Heart left ventricle (tissue), 16 donors: ENCODE measurements at regions of chr10 and their contacts with region 1.

Region 1: GRCh38 chr10:78763651-78764311 is 305.0 kb upstream of the ZMIZ1 start:
- DNase-seq: peak; percentile 43 to 66 (median 63)
- ATAC-seq: peak; percentile 66 to 78 (median 70)
- H3K4me3 ChIP-seq: no peak overlapping the region
- H3K27ac ChIP-seq: peak overlapping the region in 8 of 12 donors; percentile 3 to 83 (median 60)
- H3K4me1 ChIP-seq: peaks cover 0 to 21% (median 9%) of the 10 kb centered on the region in 12 donors
- H3K27me3 ChIP-seq: no peaks in the 10 kb centered on the region
- CTCF ChIP-seq: no peak
- POLR2A ChIP-seq: no peak

Region 2: DNA sequence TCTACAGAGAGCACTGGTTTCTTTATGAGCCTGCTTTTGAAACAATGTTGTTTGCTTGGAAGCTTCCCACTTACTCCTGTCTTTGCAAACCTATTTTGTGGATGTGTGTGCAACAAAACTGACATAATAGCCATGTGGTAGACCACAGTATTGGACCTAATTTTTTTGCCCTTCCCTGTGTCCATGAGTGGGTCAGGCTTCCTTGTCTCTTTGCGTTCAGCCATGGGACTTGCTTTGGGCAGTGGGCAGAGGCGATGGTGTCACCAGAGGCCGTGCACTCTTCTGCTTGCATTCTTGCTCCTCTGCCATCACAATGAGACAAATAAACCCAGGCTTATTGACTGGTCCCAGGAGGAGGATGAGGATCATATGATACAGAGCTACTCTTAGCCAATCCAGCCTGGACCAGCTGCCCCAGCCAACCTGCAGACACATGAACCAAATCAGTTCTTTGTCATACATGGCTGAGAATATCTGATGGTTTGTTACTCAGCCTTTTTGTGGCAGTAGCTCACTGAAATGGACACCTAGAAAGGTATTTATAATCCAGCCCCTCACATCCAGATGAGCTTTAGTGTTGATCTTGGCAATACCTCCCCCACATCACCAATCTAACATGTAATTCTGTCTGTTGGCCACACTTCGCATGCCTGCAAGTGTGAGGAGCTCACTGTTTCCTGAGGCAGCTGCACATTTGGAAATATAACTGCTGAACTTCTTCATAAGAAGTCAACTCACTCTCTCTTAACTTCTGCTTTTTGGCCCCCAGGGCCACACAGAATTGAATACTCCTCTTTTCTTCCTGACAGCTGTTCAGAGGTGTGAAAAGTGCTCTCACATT is 122.8 kb before region 1 on chr10:
- intact Hi-C with region 1: loop called in 1 of 10 experiments (anchors 10 kb)
- DNase-seq: peak in 1 of 5 donors; percentile 28
- ATAC-seq: peak in 3 of 4 donors; percentile 46 to 66 (median 65)
- H3K4me3 ChIP-seq: no peak overlapping the region
- H3K27ac ChIP-seq: peak overlapping the region in 3 of 12 donors; percentile 20 to 26 (median 24)
- H3K4me1 ChIP-seq: peaks cover 0 to 14% (median 0%) of the 10 kb centered on the region in 12 donors
- H3K27me3 ChIP-seq: no peaks in the 10 kb centered on the region
- CTCF ChIP-seq: no peak
- POLR2A ChIP-seq: no peak